ENCODE measurements at regions of chr2 and their contacts with region 1.

Region 1: DNA sequence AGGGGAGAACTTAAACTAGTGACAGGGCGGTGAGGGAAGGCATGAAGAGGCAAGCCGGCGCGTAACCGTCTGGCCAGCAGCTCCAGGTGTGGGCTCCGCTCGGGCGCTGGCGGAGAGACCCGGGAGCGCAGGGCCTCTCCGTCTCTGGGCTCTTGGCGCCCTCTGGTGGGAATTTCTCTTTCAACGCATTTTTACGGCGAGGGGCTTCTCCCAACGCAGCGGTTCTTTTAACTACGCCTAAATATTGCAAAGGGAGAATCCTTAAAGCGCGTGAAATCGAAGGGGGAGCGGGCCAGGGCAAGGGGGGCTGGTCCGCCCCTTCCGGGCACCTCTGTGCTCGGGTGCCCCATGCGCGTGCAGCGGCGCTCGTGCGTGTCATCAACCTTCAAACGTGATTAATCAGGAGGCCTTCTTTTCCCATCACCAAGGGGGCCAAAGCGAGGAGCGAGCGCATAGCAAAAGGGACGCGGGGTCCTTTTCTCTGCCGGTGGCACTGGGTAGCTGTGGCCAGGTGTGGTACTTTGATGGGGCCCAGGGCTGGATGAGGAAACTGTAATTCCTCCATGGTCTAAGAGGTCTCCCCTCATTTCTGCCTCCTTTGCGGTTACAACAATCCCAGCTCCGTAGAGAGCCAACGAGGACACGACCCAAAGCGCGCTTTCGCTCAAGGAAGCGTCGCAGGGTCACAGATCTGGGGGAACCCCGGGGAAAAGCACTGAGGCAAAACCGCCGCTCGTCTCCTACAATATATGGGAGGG is 762 bp upstream of the GAD1 start:
- DNase-seq: peak; percentile 89
- H3K4me3 ChIP-seq: peak overlapping the region; percentile 14 to 45; a peak in 2 of 4 replicates
- H3K27ac ChIP-seq: no peak overlapping the region
- H3K4me1 ChIP-seq: peaks cover 5 to 21% of the 10 kb centered on the region in 2 experiments; a peak in 2 of 4 replicates
- H3K27me3 ChIP-seq: peaks cover 82% of the 10 kb centered on the region
- CTCF ChIP-seq: peak; percentile 86
- EP300 ChIP-seq: no peak
- RAD21 ChIP-seq: peak; percentile 81

Region 2: DNA sequence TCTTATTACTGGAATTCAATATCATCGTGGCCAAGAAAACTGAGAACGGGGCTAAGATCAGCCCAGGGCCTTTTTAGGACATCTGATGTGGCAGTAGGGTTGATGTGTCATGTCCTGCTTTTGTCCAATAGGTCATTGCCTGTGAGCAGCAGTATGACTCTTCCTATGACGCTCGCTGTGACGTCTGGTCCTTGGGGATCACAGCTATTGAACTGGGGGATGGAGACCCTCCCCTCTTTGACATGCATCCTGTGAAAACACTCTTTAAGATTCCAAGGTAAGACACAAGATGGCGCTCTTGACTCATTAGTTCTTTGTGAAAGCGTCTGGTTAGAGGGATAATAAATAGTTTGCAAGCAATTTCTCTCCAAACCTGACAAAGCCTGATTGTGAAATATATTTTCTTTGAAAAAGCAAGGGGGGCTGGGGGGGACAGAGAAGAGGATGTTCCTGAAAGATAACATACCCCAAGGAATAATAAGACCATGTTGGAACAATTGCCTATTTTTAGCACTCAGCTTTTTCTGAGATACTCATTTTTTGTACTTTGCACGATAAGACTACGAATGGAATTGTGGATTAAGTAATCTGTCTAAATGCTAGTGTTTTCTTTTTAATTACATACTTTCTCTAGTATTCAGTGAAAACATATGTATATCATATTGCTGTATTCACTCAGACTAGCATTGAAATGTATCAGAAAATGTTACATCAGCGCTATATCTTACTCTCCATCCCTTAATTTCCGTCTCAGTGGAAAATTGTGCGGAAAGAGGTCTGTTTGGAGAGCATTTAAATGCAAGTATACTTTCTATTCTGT is 579.9 kb before region 1 on chr2:
- CTCF ChIA-PET with region 1: interaction called, 94 read pairs
- POLR2A ChIA-PET with region 1: no interaction called
- DNase-seq: peak; percentile 61
- H3K4me3 ChIP-seq: peak overlapping the region; percentile 14 to 17; a peak in 2 of 4 replicates
- H3K27ac ChIP-seq: no peak overlapping the region
- H3K4me1 ChIP-seq: peaks cover 0 to 5% of the 10 kb centered on the region in 2 experiments; a peak in 2 of 4 replicates
- H3K27me3 ChIP-seq: no peaks in the 10 kb centered on the region
- CTCF ChIP-seq: peak; percentile 73
- EP300 ChIP-seq: no peak
- RAD21 ChIP-seq: peak; percentile 85

Region 3: DNA sequence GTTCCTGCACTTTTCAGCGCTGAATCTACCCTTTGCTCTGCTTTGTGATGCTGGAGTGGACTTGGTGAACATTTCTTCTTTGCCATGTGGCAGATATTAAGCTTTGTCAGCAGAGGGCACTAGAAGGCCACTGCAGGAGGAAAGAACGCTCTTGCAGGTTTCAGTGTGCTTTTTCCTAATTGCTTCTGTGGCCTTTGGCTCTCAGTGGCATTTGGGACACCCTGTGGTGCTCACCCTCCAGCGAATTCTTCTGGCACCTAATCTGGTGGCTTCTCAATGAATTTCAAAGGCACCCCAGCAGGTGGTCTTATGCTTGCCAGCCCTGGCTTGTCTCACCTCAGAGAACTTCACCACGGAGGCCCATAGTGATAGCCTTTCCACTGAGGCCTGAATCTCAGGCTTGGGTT is 491.3 kb before region 1 on chr2:
- CTCF ChIA-PET with region 1: interaction called, 50 read pairs
- POLR2A ChIA-PET with region 1: no interaction called
- DNase-seq: peak; percentile 24
- H3K4me3 ChIP-seq: peak overlapping the region in 1 of 2 experiments; percentile 31; a peak in 1 of 4 replicates
- H3K27ac ChIP-seq: no peak overlapping the region
- H3K4me1 ChIP-seq: no peaks in the 10 kb centered on the region
- H3K27me3 ChIP-seq: no peaks in the 10 kb centered on the region
- CTCF ChIP-seq: peak; percentile 62
- EP300 ChIP-seq: no peak
- RAD21 ChIP-seq: peak; percentile 83

Region 4: GRCh38 chr2:170369894-170370293 is 446.0 kb before region 1 on chr2:
- CTCF ChIA-PET with region 1: interaction called, 94 read pairs
- POLR2A ChIA-PET with region 1: no interaction called
- DNase-seq: peak; percentile 11
- H3K4me3 ChIP-seq: no peak overlapping the region
- H3K27ac ChIP-seq: no peak overlapping the region
- H3K4me1 ChIP-seq: no peaks in the 10 kb centered on the region
- H3K27me3 ChIP-seq: peaks cover 15% of the 10 kb centered on the region; the same call in 1 of the 2 replicates
- CTCF ChIP-seq: peak; percentile 58
- EP300 ChIP-seq: no peak
- RAD21 ChIP-seq: peak; percentile 52; the same call in 1 of the 2 replicates

Region 5: DNA sequence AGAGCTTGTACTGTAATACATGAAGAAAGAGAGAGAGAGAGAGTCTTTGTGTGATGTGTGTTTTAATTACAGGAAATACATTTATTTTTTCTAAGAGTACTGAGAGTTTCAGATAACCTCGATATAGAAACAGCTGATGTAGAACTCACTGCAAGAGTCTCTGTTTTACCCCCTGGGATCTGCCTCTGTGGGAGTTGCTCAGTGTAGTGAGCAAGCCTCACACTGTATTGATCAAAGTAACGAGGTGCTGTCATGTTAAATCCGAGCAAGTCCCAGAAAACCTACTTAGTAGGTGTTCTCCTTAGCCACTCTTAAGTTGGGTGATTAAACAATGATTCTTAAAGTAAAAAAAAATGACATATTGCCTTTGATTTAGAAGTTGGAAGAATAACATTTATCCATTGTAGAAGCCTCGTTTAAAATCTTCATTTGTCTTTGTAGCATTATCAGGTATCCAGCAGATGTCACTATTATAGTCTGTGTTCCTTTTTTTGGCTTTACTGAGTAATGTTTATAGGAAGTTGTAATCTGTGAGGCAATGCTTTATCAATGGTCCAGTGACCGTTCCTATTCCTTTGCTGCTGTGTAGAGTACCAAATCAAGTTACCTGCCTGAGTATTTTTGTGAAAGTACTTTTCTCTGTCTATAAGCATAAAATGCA is 419.0 kb before region 1 on chr2:
- CTCF ChIA-PET with region 1: interaction called, 27 read pairs
- POLR2A ChIA-PET with region 1: no interaction called
- DNase-seq: peak; percentile 15
- H3K4me3 ChIP-seq: no peak overlapping the region
- H3K27ac ChIP-seq: no peak overlapping the region
- H3K4me1 ChIP-seq: peaks cover 0 to 4% of the 10 kb centered on the region in 2 experiments; a peak in 1 of 4 replicates
- H3K27me3 ChIP-seq: no peaks in the 10 kb centered on the region
- CTCF ChIP-seq: peak; percentile 54
- EP300 ChIP-seq: no peak
- RAD21 ChIP-seq: peak; percentile 48

Region 6: GRCh38 chr2:170425281-170425751 is 390.6 kb before region 1 on chr2:
- CTCF ChIA-PET with region 1: interaction called, 18 read pairs
- POLR2A ChIA-PET with region 1: no interaction called
- DNase-seq: no peak
- H3K4me3 ChIP-seq: no peak overlapping the region
- H3K27ac ChIP-seq: no peak overlapping the region
- H3K4me1 ChIP-seq: no peaks in the 10 kb centered on the region
- H3K27me3 ChIP-seq: no peaks in the 10 kb centered on the region
- CTCF ChIP-seq: no peak
- EP300 ChIP-seq: no peak
- RAD21 ChIP-seq: no peak

Region 7: GRCh38 chr2:170836027-170836426 is 20.1 kb after region 1 on chr2:
- CTCF ChIA-PET with region 1: interaction called, 11 read pairs
- POLR2A ChIA-PET with region 1: no interaction called
- DNase-seq: no peak
- H3K4me3 ChIP-seq: no peak overlapping the region
- H3K27ac ChIP-seq: no peak overlapping the region
- H3K4me1 ChIP-seq: no peaks in the 10 kb centered on the region
- H3K27me3 ChIP-seq: no peaks in the 10 kb centered on the region
- CTCF ChIP-seq: no peak
- EP300 ChIP-seq: no peak
- RAD21 ChIP-seq: no peak

Region 8: DNA sequence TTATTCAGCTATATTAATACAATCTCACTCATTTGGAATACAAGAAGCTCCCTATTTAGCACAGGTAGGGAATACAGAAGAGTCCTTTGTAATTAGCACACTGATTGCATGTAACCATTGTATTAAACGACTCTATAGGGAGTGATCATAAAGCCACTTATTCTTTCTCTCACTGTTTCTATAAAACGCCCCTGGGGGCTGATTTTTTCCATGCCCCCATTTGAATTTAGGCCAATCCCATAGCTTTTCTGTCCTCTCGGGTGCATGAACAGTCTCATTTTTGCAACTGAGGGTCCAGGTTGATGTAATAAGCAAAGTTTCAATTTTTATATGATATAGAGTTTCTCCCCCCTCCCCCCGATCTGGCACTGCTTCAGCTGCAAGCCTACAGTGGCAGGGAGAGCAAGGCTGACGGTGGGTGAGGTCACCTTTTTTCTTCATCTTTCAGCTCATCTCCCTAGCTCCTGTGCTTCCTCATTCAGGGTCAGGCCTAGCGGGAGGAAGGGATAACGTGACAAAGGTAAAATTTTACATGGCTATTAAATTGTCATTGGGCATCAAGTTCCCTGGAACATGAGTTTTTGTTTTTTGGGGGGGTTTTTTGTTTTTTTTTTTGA is 46.5 kb after region 1 on chr2:
- CTCF ChIA-PET with region 1: no interaction called
- POLR2A ChIA-PET with region 1: no interaction called
- DNase-seq: no peak
- H3K4me3 ChIP-seq: no peak overlapping the region
- H3K27ac ChIP-seq: no peak overlapping the region
- H3K4me1 ChIP-seq: no peaks in the 10 kb centered on the region
- H3K27me3 ChIP-seq: no peaks in the 10 kb centered on the region
- CTCF ChIP-seq: no peak
- EP300 ChIP-seq: no peak
- RAD21 ChIP-seq: no peak

Measured in SK-N-SH (cell line).